ENCODE measurements at regions of chr10 and their contacts with region 1.

Region 1: DNA sequence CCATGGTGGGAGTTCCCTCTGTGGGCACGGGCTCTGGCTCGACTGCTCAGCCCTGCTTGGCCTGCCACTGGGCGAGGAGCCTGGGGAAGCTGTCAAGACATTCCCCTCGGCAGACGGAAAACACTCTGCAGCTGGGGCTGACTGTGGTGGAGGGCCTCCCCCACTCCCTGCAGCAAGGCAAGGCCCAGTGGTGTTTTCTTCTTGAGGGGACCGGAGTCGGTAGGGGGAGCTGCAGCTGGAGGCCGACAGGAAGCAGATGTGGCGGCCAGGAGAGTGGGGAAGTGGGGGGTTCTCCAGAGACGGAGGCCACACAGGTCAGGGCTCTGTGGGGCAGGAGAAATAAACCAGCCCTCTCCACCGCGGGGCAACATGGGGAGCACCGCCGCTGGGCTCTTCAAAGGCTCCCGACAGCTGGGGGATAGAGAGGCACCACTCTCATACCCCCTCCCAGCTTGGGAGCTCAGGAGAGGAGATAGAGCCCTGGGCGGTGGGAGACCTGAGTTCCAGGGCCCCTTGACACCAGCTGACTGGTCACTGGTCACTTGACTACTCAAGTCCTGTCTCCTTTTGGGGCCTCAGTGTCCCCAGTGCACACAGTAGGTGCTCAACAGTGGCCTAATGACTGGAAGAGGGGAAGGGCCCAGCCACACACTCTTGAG is 43.4 kb downstream of the PPIF start:
- DNase-seq: peak; percentile 55 to 92 (median 91)
- H3K4me3 ChIP-seq: peak overlapping the region in 1 of 7 experiments; percentile 4
- H3K27ac ChIP-seq: no peak overlapping the region
- H3K4me1 ChIP-seq: peaks cover 3 to 12% (median 11%) of the 10 kb centered on the region in 4 experiments
- H3K27me3 ChIP-seq: no peaks in the 10 kb centered on the region

Region 2: GRCh38 chr10:79361726-79362397 is 28.8 kb before region 1 on chr10:
- CTCF ChIA-PET with region 1: no interaction called
- POLR2A ChIA-PET with region 1: no interaction called
- DNase-seq: peak in 2 of 3 donors; percentile 58 to 68
- H3K4me3 ChIP-seq: peak overlapping the region in 1 of 7 experiments; percentile 36
- H3K27ac ChIP-seq: no peak overlapping the region
- H3K4me1 ChIP-seq: peaks cover 0 to 9% (median 4%) of the 10 kb centered on the region in 4 experiments
- H3K27me3 ChIP-seq: no peaks in the 10 kb centered on the region

Region 3: GRCh38 chr10:79487296-79488194 is 96.9 kb after region 1 on chr10:
- CTCF ChIA-PET with region 1: interaction called, 14 read pairs
- POLR2A ChIA-PET with region 1: no interaction called
- DNase-seq: peak; percentile 45 to 63 (median 55)
- H3K4me3 ChIP-seq: no peak overlapping the region
- H3K27ac ChIP-seq: no peak overlapping the region
- H3K4me1 ChIP-seq: peaks cover 0 to 2% (median 0%) of the 10 kb centered on the region in 4 experiments
- H3K27me3 ChIP-seq: peaks cover 0 to 2% (median 0%) of the 10 kb centered on the region in 5 experiments

Region 4: DNA sequence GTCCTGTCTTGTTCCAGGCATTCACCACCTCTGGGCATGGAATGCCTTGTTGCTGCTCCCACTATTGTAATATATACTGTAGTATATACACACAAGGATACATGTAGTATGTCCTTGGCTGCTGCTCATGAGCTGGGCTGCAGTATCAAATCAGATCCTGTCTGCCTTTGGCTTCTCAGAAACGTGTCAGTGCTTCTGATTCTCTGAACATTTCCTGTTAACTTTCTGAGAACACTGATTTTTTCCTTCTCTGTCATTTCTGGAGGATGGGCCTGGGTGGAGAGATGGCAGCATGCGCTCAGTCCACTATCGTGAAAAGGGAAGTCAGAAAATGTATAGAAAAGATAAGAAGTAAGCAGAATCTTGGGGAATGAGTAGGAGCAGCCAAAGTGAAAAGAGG is 157.3 kb after region 1 on chr10:
- CTCF ChIA-PET with region 1: no interaction called
- POLR2A ChIA-PET with region 1: no interaction called
- DNase-seq: peak in 2 of 3 donors; percentile 10 to 21
- H3K4me3 ChIP-seq: no peak overlapping the region
- H3K27ac ChIP-seq: no peak overlapping the region
- H3K4me1 ChIP-seq: no peaks in the 10 kb centered on the region
- H3K27me3 ChIP-seq: peaks cover 0 to 3% (median 0%) of the 10 kb centered on the region in 5 experiments

Measured in common myeloid progenitor, CD34-positive (primary cell).